ENCODE measurements at regions of chr11 and their contacts with region 1.

Region 1: GRCh38 chr11:121318848-121319834 is 26.6 kb downstream of the SC5D start:
- DNase-seq: no peak
- ATAC-seq: peak; percentile 84
- H3K4me3 ChIP-seq: no peak overlapping the region
- H3K27ac ChIP-seq: no peak overlapping the region
- H3K4me1 ChIP-seq: peaks cover 4% of the 10 kb centered on the region; the same call in 1 of the 2 replicates
- H3K27me3 ChIP-seq: no peaks in the 10 kb centered on the region
- CTCF ChIP-seq: peak; percentile 75 to 88 (median 86)
- EP300 ChIP-seq: no peak
- POLR2A ChIP-seq: no peak
- RAD21 ChIP-seq: peak; percentile 93

Region 2: DNA sequence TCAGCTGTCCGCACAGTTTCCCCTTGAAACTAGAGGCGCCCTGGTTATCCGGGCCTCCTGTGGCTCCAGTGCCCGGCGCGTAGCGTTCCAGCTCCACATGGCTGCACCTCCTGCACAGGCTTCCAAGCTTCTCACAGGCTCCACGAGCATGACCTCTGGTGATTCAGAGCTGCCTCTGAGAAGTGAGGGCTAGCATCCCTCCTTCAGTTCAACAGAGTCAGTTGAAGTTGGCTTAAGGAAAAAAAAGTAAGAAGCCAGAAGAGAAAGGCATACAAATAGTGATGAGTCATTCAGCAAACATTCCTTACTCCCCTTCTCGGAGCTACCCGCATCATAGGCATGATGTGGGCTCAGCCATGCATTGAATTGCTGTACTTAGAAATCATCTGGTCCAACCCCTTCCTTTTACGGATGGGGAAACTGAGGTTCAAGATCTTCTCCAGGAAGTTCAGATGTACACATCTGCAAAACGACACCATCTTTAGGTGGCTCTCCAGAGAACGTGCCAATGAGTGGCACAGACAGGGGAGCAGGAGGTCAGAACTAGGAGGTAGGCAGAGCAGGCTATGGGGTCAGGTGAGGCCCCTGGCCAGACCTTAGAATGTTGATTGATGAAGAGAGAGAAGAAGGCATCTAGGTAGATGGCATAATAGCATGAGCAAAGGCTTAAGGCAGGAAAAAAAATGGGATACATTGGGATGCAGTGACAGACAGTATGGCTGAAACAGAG is 511.6 kb before region 1 on chr11:
- CTCF ChIA-PET with region 1: no interaction called
- POLR2A ChIA-PET with region 1: no interaction called
- RAD21 ChIA-PET with region 1: no interaction called
- SMC1A ChIA-PET with region 1: no interaction called
- in situ Hi-C with region 1: no loop called
- intact Hi-C with region 1: no loop called
- DNase-seq: no peak
- ATAC-seq: no peak
- H3K4me3 ChIP-seq: no peak overlapping the region
- H3K27ac ChIP-seq: no peak overlapping the region
- H3K4me1 ChIP-seq: no peaks in the 10 kb centered on the region
- H3K27me3 ChIP-seq: no peaks in the 10 kb centered on the region
- CTCF ChIP-seq: no peak
- EP300 ChIP-seq: no peak
- POLR2A ChIP-seq: no peak
- RAD21 ChIP-seq: no peak

Region 3: GRCh38 chr11:120945042-120945441 is 374.1 kb before region 1 on chr11:
- CTCF ChIA-PET with region 1: no interaction called
- POLR2A ChIA-PET with region 1: no interaction called
- RAD21 ChIA-PET with region 1: no interaction called
- SMC1A ChIA-PET with region 1: no interaction called
- in situ Hi-C with region 1: no loop called
- intact Hi-C with region 1: no loop called
- DNase-seq: no peak
- ATAC-seq: no peak
- H3K4me3 ChIP-seq: no peak overlapping the region
- H3K27ac ChIP-seq: no peak overlapping the region
- H3K4me1 ChIP-seq: no peaks in the 10 kb centered on the region
- H3K27me3 ChIP-seq: no peaks in the 10 kb centered on the region
- CTCF ChIP-seq: peak in 2 of 3 experiments; percentile 7 to 18; a peak in 1 of 6 replicates
- EP300 ChIP-seq: no peak
- POLR2A ChIP-seq: no peak
- RAD21 ChIP-seq: peak; percentile 20; the same call in 1 of the 2 replicates

Region 4: GRCh38 chr11:121163658-121164308 is 155.4 kb before region 1 on chr11:
- CTCF ChIA-PET with region 1: no interaction called
- POLR2A ChIA-PET with region 1: no interaction called
- RAD21 ChIA-PET with region 1: no interaction called
- SMC1A ChIA-PET with region 1: no interaction called
- in situ Hi-C with region 1: no loop called
- intact Hi-C with region 1: no loop called
- DNase-seq: peak; percentile 4
- ATAC-seq: peak; percentile 94
- H3K4me3 ChIP-seq: no peak overlapping the region
- H3K27ac ChIP-seq: no peak overlapping the region
- H3K4me1 ChIP-seq: no peaks in the 10 kb centered on the region
- H3K27me3 ChIP-seq: no peaks in the 10 kb centered on the region; a peak in 2 of 4 replicates
- CTCF ChIP-seq: no peak
- EP300 ChIP-seq: no peak
- POLR2A ChIP-seq: no peak
- RAD21 ChIP-seq: no peak

Region 5: GRCh38 chr11:121265586-121265985 is 53.6 kb before region 1 on chr11:
- CTCF ChIA-PET with region 1: no interaction called
- POLR2A ChIA-PET with region 1: no interaction called
- RAD21 ChIA-PET with region 1: no interaction called
- SMC1A ChIA-PET with region 1: no interaction called
- in situ Hi-C with region 1: no loop called
- intact Hi-C with region 1: no loop called
- DNase-seq: no peak
- ATAC-seq: no peak
- H3K4me3 ChIP-seq: no peak overlapping the region
- H3K27ac ChIP-seq: no peak overlapping the region
- H3K4me1 ChIP-seq: no peaks in the 10 kb centered on the region; the same call in 1 of the 2 replicates
- H3K27me3 ChIP-seq: peaks cover 1 to 7% of the 10 kb centered on the region in 2 experiments; a peak in 2 of 4 replicates
- CTCF ChIP-seq: no peak
- EP300 ChIP-seq: no peak
- POLR2A ChIP-seq: no peak
- RAD21 ChIP-seq: no peak

Region 6: DNA sequence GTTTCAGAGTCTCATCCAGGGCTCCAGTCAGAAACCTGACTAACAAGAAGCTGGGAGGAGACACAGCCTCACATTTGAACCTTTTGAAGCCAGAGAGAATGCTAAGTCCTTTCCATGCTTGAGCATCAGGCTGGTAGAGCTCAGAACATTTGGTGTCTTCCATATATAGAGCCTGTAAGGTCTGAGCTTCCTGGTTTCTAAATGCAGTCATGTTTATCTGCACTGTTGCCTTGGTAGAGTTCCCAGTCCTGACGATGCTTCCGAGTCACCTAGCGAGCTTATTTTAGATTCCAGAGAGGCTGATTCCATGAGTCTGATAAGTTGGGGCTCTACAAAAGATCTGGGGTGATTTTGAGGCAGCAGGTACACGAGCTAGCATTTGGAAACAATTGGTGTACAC is 64.6 kb after region 1 on chr11:
- CTCF ChIA-PET with region 1: interaction called, 3 read pairs
- POLR2A ChIA-PET with region 1: no interaction called
- RAD21 ChIA-PET with region 1: interaction called, 12 read pairs
- SMC1A ChIA-PET with region 1: interaction called, 7 read pairs
- in situ Hi-C with region 1: no loop called
- intact Hi-C with region 1: no loop called
- DNase-seq: no peak
- ATAC-seq: no peak
- H3K4me3 ChIP-seq: no peak overlapping the region
- H3K27ac ChIP-seq: no peak overlapping the region
- H3K4me1 ChIP-seq: no peaks in the 10 kb centered on the region
- H3K27me3 ChIP-seq: no peaks in the 10 kb centered on the region
- CTCF ChIP-seq: no peak
- EP300 ChIP-seq: no peak
- POLR2A ChIP-seq: no peak
- RAD21 ChIP-seq: no peak

Region 7: DNA sequence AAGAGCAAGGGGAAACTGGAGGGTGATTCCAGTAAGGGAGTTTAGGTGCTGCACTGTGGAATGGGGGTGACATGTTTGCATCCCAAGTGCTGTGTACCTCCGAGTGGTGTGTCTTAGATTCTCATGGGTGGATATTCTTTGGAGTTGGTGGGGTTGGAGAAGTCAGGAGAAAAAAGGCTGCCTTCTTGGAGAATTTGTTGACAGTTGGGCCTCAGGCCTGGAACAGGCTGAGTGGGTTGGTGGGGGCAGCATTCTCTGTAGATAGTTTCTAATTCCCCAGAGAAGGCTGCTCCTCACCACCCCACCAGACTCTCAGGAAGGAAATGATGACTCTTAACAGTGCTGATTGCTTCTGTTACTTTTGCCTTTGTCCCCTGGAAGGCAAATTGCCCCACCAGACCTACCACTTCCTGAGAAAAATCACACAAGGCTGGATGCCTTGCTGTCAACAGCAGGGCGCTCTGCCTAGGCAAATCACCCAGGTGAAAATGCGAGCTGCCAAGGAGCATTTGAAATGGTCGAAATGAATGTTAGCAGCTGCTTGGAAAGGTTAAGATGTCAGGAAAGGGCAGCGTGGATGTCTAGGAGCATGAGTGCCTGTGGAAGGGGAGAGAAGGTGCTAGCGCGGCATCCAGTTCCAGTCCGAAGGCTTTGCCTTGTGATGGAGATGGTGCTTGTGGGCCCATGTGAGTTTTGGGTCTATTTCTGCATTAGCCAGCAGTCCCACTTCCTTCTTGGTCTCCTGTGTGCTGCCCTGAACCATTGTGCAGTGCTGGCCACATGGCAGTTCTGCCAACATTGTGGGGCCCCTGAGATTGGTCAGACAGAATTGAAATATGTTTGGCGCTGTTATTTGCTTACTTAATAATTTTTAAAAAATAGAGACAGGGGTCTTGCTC is 163.3 kb after region 1 on chr11:
- CTCF ChIA-PET with region 1: interaction called, 10 read pairs
- POLR2A ChIA-PET with region 1: no interaction called
- RAD21 ChIA-PET with region 1: no interaction called
- SMC1A ChIA-PET with region 1: interaction called, 4 read pairs
- in situ Hi-C with region 1: no loop called
- intact Hi-C with region 1: no loop called
- DNase-seq: peak; percentile 93
- ATAC-seq: peak; percentile 93
- H3K4me3 ChIP-seq: peak overlapping the region; percentile 36
- H3K27ac ChIP-seq: peak overlapping the region; percentile 77
- H3K4me1 ChIP-seq: peaks cover 37% of the 10 kb centered on the region
- H3K27me3 ChIP-seq: no peaks in the 10 kb centered on the region
- CTCF ChIP-seq: no peak
- EP300 ChIP-seq: peak in 1 of 2 experiments; percentile 40; a peak in 1 of 4 replicates
- POLR2A ChIP-seq: no peak
- RAD21 ChIP-seq: no peak

Measured in GM12878 (cell line).